ENCODE measurements at regions of chr2 and their contacts with region 1.

Region 1: GRCh38 chr2:102082571-102083392 is 59.8 kb upstream of the IL1R1 start:
- DNase-seq: peak; percentile 74
- ATAC-seq: peak; percentile 90
- H3K4me3 Mint-ChIP-seq: peak overlapping the region; percentile 50
- H3K27ac Mint-ChIP-seq: peak overlapping the region; percentile 93
- H3K4me1 Mint-ChIP-seq: peaks cover 74% of the 10 kb centered on the region
- H3K27me3 Mint-ChIP-seq: no peaks in the 10 kb centered on the region

Region 2: DNA sequence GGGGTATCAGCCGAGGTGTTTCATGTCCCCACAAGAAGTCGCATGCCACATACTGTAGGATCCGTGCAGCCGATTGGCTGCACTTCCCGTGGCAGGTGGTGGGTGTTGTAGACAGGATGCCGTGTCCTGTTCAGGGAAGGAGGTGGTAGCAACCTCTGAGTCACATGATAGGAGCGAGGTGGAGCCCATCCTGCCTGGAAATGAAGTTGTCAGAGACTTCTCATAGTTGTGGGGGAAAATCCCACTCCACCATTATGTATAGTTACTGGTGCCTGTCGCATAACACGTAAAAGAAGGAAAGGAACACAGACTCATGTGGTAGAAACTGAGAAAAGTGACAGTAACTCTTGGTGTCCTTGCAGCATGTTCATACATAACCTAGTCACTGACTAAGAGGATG is 182.4 kb before region 1 on chr2:
- CTCF ChIA-PET with region 1: no interaction called
- POLR2A ChIA-PET with region 1: no interaction called
- intact Hi-C with region 1: loop called (anchors 5 to 10 kb)
- DNase-seq: peak; percentile 82
- ATAC-seq: peak; percentile 93
- H3K4me3 Mint-ChIP-seq: peak overlapping the region; percentile 24
- H3K27ac Mint-ChIP-seq: peak overlapping the region; percentile 90
- H3K4me1 Mint-ChIP-seq: peaks cover 38% of the 10 kb centered on the region
- H3K27me3 Mint-ChIP-seq: peaks cover 10% of the 10 kb centered on the region

Region 3: GRCh38 chr2:102103992-102104871 is 21.4 kb after region 1 on chr2:
- CTCF ChIA-PET with region 1: interaction called, 5 read pairs
- POLR2A ChIA-PET with region 1: interaction called, 6 read pairs
- intact Hi-C with region 1: loop called (anchors 1 kb)
- DNase-seq: peak; percentile 92
- ATAC-seq: peak; percentile 78
- H3K4me3 Mint-ChIP-seq: peak overlapping the region; percentile 80
- H3K27ac Mint-ChIP-seq: peak overlapping the region; percentile 84
- H3K4me1 Mint-ChIP-seq: peaks cover 59% of the 10 kb centered on the region
- H3K27me3 Mint-ChIP-seq: peaks cover 11% of the 10 kb centered on the region

Region 4: DNA sequence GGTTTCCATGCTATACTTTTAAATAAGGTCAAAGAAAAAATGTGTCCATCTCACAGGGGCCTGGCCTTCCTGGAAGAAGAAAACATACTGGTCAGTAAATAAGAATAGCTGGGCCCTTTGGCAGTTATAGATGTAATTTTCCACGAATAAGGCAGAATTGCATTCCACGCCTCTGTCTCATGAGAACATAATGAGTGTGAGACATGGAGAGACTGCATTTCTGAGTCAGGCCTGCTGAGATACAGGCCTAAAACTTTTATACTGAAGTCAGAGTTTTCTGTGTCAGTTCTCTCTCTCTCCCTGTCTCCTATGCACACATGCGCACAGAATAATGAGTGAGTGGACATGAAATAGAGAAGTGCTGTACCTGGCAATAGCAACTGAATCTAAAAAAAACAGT is 39.3 kb after region 1 on chr2:
- CTCF ChIA-PET with region 1: no interaction called
- POLR2A ChIA-PET with region 1: no interaction called
- intact Hi-C with region 1: loop called in 1 of 2 experiments (anchors 2 kb)
- DNase-seq: no peak
- ATAC-seq: peak; percentile 30
- H3K4me3 Mint-ChIP-seq: no peak overlapping the region
- H3K27ac Mint-ChIP-seq: no peak overlapping the region
- H3K4me1 Mint-ChIP-seq: peaks cover 41% of the 10 kb centered on the region
- H3K27me3 Mint-ChIP-seq: peaks cover 17% of the 10 kb centered on the region

Region 5: DNA sequence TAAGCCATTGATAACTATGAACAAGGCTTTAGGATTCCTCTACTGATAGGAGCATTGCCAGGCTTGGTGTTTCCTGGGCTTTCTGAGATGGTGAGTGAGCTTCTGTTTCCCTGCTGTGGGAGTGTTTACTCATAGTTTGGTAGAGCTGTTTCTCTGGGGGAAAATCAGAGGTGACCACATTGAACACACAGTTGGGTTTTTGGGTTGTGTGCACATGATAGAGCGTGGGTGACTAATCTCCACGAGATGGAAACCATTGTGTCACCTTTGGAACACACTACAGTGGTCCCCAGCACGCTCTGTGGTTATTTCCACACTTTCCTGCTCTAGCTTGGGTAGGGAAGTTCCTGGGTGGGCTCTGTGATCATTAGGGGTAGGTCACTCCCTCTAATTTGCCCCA is 65.2 kb after region 1 on chr2:
- CTCF ChIA-PET with region 1: interaction called, 4 read pairs
- POLR2A ChIA-PET with region 1: no interaction called
- intact Hi-C with region 1: loop called in 1 of 2 experiments (anchors 1 kb)
- DNase-seq: peak; percentile 81
- ATAC-seq: peak; percentile 87
- H3K4me3 Mint-ChIP-seq: no peak overlapping the region
- H3K27ac Mint-ChIP-seq: peak overlapping the region; percentile 89
- H3K4me1 Mint-ChIP-seq: peaks cover 26% of the 10 kb centered on the region
- H3K27me3 Mint-ChIP-seq: peaks cover 7% of the 10 kb centered on the region

Region 6: GRCh38 chr2:102206666-102207341 is 124.0 kb after region 1 on chr2:
- CTCF ChIA-PET with region 1: no interaction called
- POLR2A ChIA-PET with region 1: no interaction called
- intact Hi-C with region 1: no loop called
- DNase-seq: no peak
- ATAC-seq: no peak
- H3K4me3 Mint-ChIP-seq: no peak overlapping the region
- H3K27ac Mint-ChIP-seq: no peak overlapping the region
- H3K4me1 Mint-ChIP-seq: no peaks in the 10 kb centered on the region
- H3K27me3 Mint-ChIP-seq: no peaks in the 10 kb centered on the region

Region 7: DNA sequence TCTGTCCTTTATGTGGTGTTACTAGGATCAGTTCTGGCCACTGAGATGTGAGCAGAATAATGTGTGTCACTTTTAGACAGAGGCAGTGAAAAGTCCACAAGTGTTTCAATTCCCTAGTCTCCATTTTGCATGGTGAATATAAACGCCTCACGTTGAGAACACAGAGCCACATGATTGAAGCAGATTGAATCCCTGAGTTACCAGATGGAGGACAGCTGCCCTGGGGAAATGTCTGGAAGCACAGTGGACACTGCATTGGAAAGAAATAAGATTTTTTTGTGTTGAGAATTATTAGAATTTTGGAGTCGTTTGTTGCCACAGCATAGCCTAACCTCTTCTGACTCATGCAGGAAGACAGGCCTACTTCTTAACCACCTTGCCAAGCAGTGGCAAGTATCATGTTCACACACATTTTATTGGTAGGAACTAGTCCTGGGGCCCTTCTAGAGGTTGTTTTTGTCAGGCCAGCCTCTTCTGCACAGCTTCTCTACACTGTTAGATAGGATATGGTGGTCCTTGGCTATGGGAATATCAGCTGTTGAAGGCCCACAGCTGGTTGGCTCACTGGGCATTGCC is 867.7 kb after region 1 on chr2:
- CTCF ChIA-PET with region 1: no interaction called
- POLR2A ChIA-PET with region 1: no interaction called
- intact Hi-C with region 1: no loop called
- DNase-seq: no peak
- ATAC-seq: no peak
- H3K4me3 Mint-ChIP-seq: no peak overlapping the region
- H3K27ac Mint-ChIP-seq: no peak overlapping the region
- H3K4me1 Mint-ChIP-seq: no peaks in the 10 kb centered on the region
- H3K27me3 Mint-ChIP-seq: no peaks in the 10 kb centered on the region

Measured in activated CD4-positive, alpha-beta T cell treated with anti-CD3 and anti-CD28 coated beads for 36 hours (primary cell).